Ovary (tissue), 10 donors: ENCODE measurements at regions of chr3 and their contacts with region 1.

Region 1: DNA sequence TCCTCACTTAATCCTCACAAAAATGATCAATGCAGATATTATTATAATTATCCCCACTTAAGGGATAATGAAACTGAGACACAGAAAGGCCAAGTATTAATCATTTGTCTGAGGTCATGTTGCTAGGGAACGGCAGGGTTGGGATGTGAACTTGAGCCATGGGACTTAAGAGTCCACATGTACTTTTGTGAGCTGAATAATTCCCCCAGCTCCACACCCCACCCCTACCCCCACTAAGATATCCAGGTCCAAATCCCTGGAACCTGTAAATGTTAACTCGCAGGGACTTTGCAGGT is 290.5 kb upstream of the GADL1 start:
- DNase-seq: no peak
- H3K4me3 ChIP-seq: no peak overlapping the region
- H3K27ac ChIP-seq: no peak overlapping the region
- H3K4me1 ChIP-seq: no peaks in the 10 kb centered on the region
- H3K27me3 ChIP-seq: no peaks in the 10 kb centered on the region
- CTCF ChIP-seq: no peak
- EP300 ChIP-seq: no peak
- POLR2A ChIP-seq: no peak

Region 2: GRCh38 chr3:31043184-31043820 is 141.7 kb before region 1 on chr3:
- intact Hi-C with region 1: no loop called
- DNase-seq: no peak
- H3K4me3 ChIP-seq: no peak overlapping the region
- H3K27ac ChIP-seq: no peak overlapping the region
- H3K4me1 ChIP-seq: no peaks in the 10 kb centered on the region
- H3K27me3 ChIP-seq: no peaks in the 10 kb centered on the region
- CTCF ChIP-seq: no peak
- EP300 ChIP-seq: no peak
- POLR2A ChIP-seq: no peak

Region 3: DNA sequence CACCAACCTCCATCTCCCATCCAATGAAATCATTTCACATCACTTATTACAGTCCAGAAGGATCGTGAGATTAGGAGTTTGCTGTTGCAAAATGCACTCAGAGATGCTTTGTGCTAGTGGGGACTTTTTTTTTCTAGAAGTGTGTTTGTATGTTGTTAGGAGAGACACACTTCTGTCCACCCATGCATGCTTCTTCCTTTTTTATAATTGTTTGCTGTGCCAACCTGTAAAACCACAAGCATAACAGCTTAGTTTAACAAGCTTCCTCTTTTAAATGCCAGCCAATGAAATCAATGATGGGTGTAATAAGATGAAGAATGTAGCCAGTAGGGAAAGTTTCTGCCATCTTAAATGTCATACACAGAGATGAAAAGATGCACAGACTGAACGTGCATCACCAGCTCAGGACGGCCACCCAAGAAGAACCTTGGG is 42.1 kb after region 1 on chr3:
- intact Hi-C with region 1: loop called in 1 of 4 experiments (anchors 1 kb)
- DNase-seq: no peak
- H3K4me3 ChIP-seq: no peak overlapping the region
- H3K27ac ChIP-seq: no peak overlapping the region
- H3K4me1 ChIP-seq: no peaks in the 10 kb centered on the region
- H3K27me3 ChIP-seq: no peaks in the 10 kb centered on the region
- CTCF ChIP-seq: no peak
- EP300 ChIP-seq: no peak
- POLR2A ChIP-seq: no peak

Region 4: GRCh38 chr3:31462050-31462569 is 277.1 kb after region 1 on chr3:
- intact Hi-C with region 1: no loop called
- DNase-seq: no peak
- H3K4me3 ChIP-seq: no peak overlapping the region
- H3K27ac ChIP-seq: no peak overlapping the region
- H3K4me1 ChIP-seq: no peaks in the 10 kb centered on the region
- H3K27me3 ChIP-seq: no peaks in the 10 kb centered on the region
- CTCF ChIP-seq: no peak
- EP300 ChIP-seq: no peak
- POLR2A ChIP-seq: no peak